ENCODE measurements at regions of chr10 and their contacts with region 1.

Region 1: GRCh38 chr10:75029857-75030256 is 81.6 kb upstream of the SAMD8 start:
- DNase-seq: no peak
- ATAC-seq: no peak
- H3K4me3 ChIP-seq: no peak overlapping the region
- H3K4me3 Mint-ChIP-seq: no peak overlapping the region
- H3K27ac ChIP-seq: no peak overlapping the region
- H3K27ac Mint-ChIP-seq: no peak overlapping the region
- H3K4me1 ChIP-seq: peaks cover 3% of the 10 kb centered on the region
- H3K4me1 Mint-ChIP-seq: peaks cover 5% of the 10 kb centered on the region
- H3K27me3 ChIP-seq: no peaks in the 10 kb centered on the region
- H3K27me3 Mint-ChIP-seq: no peaks in the 10 kb centered on the region
- CTCF ChIP-seq: no peak

Region 2: GRCh38 chr10:75091146-75091545 is 61.3 kb after region 1 on chr10:
- CTCF ChIA-PET with region 1: no interaction called
- POLR2A ChIA-PET with region 1: no interaction called
- intact Hi-C with region 1: loop called in 1 of 2 experiments (anchors 5 kb)
- DNase-seq: no peak
- ATAC-seq: no peak
- H3K4me3 ChIP-seq: no peak overlapping the region
- H3K4me3 Mint-ChIP-seq: no peak overlapping the region
- H3K27ac ChIP-seq: no peak overlapping the region
- H3K27ac Mint-ChIP-seq: no peak overlapping the region
- H3K4me1 ChIP-seq: peaks cover 14% of the 10 kb centered on the region
- H3K4me1 Mint-ChIP-seq: peaks cover 15% of the 10 kb centered on the region
- H3K27me3 ChIP-seq: no peaks in the 10 kb centered on the region
- H3K27me3 Mint-ChIP-seq: no peaks in the 10 kb centered on the region
- CTCF ChIP-seq: no peak

Measured in CD4-positive, alpha-beta T cell (primary cell).